ENCODE measurements at regions of chr2 and their contacts with region 1.

Region 1: GRCh38 chr2:232809349-232810124 is 33.2 kb upstream of the KCNJ13 start:
- DNase-seq: no peak
- ATAC-seq: no peak
- H3K4me3 Mint-ChIP-seq: no peak overlapping the region
- H3K27ac Mint-ChIP-seq: no peak overlapping the region
- H3K4me1 Mint-ChIP-seq: no peaks in the 10 kb centered on the region
- H3K27me3 Mint-ChIP-seq: no peaks in the 10 kb centered on the region

Region 2: GRCh38 chr2:232668805-232669444 is 140.6 kb before region 1 on chr2:
- CTCF ChIA-PET with region 1: no interaction called
- POLR2A ChIA-PET with region 1: no interaction called
- DNase-seq: no peak
- ATAC-seq: no peak
- H3K4me3 Mint-ChIP-seq: no peak overlapping the region
- H3K27ac Mint-ChIP-seq: no peak overlapping the region
- H3K4me1 Mint-ChIP-seq: no peaks in the 10 kb centered on the region
- H3K27me3 Mint-ChIP-seq: peaks cover 4% of the 10 kb centered on the region

Region 3: DNA sequence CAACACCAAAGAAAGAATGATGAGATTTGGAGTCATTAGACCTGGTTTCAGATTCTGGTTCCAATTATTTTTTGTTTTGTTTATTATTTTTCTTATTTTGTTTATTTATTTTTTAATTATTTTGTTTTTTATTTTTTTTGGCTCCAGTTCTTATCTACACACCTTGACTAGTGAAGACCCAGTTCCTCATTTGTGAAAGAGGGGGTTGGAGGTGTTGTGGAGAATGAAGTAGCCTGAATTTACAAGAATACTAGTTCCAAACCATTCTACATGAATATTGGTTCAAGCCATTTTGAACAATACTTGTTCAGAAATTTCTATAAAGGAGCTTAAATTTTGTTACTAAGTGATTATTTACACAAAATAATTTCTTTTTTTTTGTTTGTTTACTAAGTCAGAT is 26.3 kb before region 1 on chr2:
- CTCF ChIA-PET with region 1: interaction called, 10 read pairs
- POLR2A ChIA-PET with region 1: no interaction called
- DNase-seq: no peak
- ATAC-seq: no peak
- H3K4me3 Mint-ChIP-seq: no peak overlapping the region
- H3K27ac Mint-ChIP-seq: no peak overlapping the region
- H3K4me1 Mint-ChIP-seq: peaks cover 8% of the 10 kb centered on the region
- H3K27me3 Mint-ChIP-seq: no peaks in the 10 kb centered on the region

Region 4: DNA sequence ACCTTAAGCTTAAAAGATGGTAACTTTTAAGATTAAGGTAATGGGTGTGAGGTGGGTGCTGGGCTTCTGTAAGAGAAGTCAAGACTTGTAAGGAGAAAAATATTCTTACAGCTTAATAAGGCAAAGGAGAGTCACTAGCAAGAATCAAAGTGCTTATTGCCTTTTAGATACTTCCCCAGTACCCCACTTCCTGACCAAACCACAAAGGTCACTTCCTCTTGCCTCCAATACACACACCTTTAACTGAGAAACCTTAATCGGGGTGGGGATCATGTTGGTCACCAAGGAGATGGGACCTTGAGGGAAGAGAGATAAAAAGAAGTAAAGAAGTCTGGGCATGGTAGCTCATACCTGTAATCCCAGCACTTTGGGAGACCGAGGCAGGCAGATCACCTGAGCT is 431.4 kb after region 1 on chr2:
- CTCF ChIA-PET with region 1: no interaction called
- POLR2A ChIA-PET with region 1: no interaction called
- DNase-seq: peak; percentile 81
- ATAC-seq: peak; percentile 72
- H3K4me3 Mint-ChIP-seq: peak overlapping the region; percentile 44
- H3K27ac Mint-ChIP-seq: peak overlapping the region; percentile 80
- H3K4me1 Mint-ChIP-seq: peaks cover 75% of the 10 kb centered on the region
- H3K27me3 Mint-ChIP-seq: no peaks in the 10 kb centered on the region

Measured in activated CD8-positive, alpha-beta T cell treated with anti-CD3 and anti-CD28 coated beads, Interleukin-2, amount 10 ng/mL, durations not matched to agents 7 days and 5 days (primary cell).